B cell (primary cell): ENCODE measurements at regions of chr3 and their contacts with region 1.

Region 1: GRCh38 chr3:71006810-71007785 is 576.4 kb downstream of the FOXP1 start:
- DNase-seq: peak; percentile 69
- ATAC-seq: no peak
- H3K4me3 ChIP-seq: no peak overlapping the region
- H3K4me3 Mint-ChIP-seq: no peak overlapping the region
- H3K27ac ChIP-seq: peak overlapping the region in 1 of 2 donors; percentile 98
- H3K27ac Mint-ChIP-seq: peak overlapping the region; percentile 87
- H3K4me1 ChIP-seq: peaks cover 47 to 54% of the 10 kb centered on the region in 2 donors
- H3K4me1 Mint-ChIP-seq: peaks cover 64% of the 10 kb centered on the region
- H3K27me3 ChIP-seq: no peaks in the 10 kb centered on the region
- H3K27me3 Mint-ChIP-seq: no peaks in the 10 kb centered on the region
- CTCF ChIP-seq: peak; percentile 77

Region 2: DNA sequence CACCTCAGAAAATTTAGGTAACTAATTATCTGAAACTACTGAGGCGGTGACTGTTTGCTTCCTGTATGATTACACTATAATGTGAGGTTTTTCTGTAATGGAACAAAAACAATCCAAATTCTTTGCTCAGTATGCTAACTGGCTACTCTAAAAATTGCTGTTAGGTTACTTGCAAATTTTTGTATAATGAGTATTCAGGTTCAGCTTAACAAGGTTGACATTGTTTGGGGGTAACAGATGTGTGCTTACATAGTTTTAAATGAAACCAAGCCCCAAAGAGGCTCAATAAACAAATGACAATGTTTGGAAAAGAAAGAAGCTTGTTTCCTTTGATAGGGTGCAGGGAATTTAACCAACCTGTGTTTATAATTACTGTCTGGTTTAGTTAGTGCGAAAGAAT is 280.1 kb before region 1 on chr3:
- CTCF ChIA-PET with region 1: no interaction called
- POLR2A ChIA-PET with region 1: no interaction called
- intact Hi-C with region 1: no loop called
- DNase-seq: no peak
- ATAC-seq: no peak
- H3K4me3 ChIP-seq: no peak overlapping the region
- H3K4me3 Mint-ChIP-seq: no peak overlapping the region
- H3K27ac ChIP-seq: no peak overlapping the region
- H3K27ac Mint-ChIP-seq: no peak overlapping the region
- H3K4me1 ChIP-seq: no peaks in the 10 kb centered on the region
- H3K4me1 Mint-ChIP-seq: no peaks in the 10 kb centered on the region
- H3K27me3 ChIP-seq: no peaks in the 10 kb centered on the region
- H3K27me3 Mint-ChIP-seq: peaks cover 16% of the 10 kb centered on the region
- CTCF ChIP-seq: no peak

Region 3: GRCh38 chr3:70990723-70991122 is 16.4 kb before region 1 on chr3:
- CTCF ChIA-PET with region 1: interaction called, 4 read pairs
- POLR2A ChIA-PET with region 1: no interaction called
- intact Hi-C with region 1: loop called (anchors 2 kb)
- DNase-seq: no peak
- ATAC-seq: no peak
- H3K4me3 ChIP-seq: no peak overlapping the region
- H3K4me3 Mint-ChIP-seq: no peak overlapping the region
- H3K27ac ChIP-seq: peak overlapping the region in 1 of 2 donors; percentile 46
- H3K27ac Mint-ChIP-seq: peak overlapping the region; percentile 11
- H3K4me1 ChIP-seq: peaks cover 10 to 11% of the 10 kb centered on the region in 2 donors
- H3K4me1 Mint-ChIP-seq: peaks cover 28% of the 10 kb centered on the region
- H3K27me3 ChIP-seq: no peaks in the 10 kb centered on the region
- H3K27me3 Mint-ChIP-seq: no peaks in the 10 kb centered on the region
- CTCF ChIP-seq: no peak

Region 4: DNA sequence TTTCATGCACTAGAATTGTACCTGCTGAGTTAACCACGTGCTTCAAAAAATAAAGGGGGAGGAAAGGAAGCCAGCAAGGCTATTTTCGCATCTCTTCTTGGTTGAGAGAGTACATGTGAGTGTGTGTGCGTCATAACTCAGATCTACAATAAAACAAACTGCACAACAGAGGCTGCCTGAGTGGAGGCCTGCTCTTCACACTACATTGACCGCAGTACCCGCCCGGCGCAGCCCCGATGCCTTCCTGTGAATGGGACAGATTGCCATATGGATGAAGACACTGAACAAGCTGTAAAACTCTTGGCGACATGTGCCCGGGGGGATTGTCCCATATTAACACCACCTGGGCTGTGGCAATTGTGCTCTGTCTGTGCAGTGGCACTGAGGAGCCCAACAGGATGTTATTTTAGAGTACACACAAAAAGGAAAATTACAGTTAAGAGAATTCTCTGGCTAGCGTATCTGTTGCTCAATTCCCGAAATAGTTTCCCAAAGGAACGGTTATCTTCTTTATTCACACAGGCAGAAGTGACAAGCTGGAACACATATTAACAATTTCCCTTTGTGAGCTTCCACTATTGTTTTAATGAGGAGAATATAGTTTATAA is 24.9 kb after region 1 on chr3:
- CTCF ChIA-PET with region 1: interaction called, 10 read pairs
- POLR2A ChIA-PET with region 1: interaction called, 3 read pairs
- intact Hi-C with region 1: loop called (anchors 1 kb)
- DNase-seq: peak; percentile 92
- ATAC-seq: peak; percentile 94
- H3K4me3 ChIP-seq: peak overlapping the region in 2 of 5 experiments; percentile 10 to 31
- H3K4me3 Mint-ChIP-seq: peak overlapping the region; percentile 69
- H3K27ac ChIP-seq: peak overlapping the region; percentile 89 to 91
- H3K27ac Mint-ChIP-seq: peak overlapping the region; percentile 96
- H3K4me1 ChIP-seq: peaks cover 69 to 74% of the 10 kb centered on the region in 2 donors
- H3K4me1 Mint-ChIP-seq: peaks cover 90% of the 10 kb centered on the region
- H3K27me3 ChIP-seq: no peaks in the 10 kb centered on the region
- H3K27me3 Mint-ChIP-seq: no peaks in the 10 kb centered on the region
- CTCF ChIP-seq: no peak

Region 5: GRCh38 chr3:71069797-71070196 is 62.7 kb after region 1 on chr3:
- CTCF ChIA-PET with region 1: interaction called, 64 read pairs
- POLR2A ChIA-PET with region 1: interaction called, 6 read pairs
- intact Hi-C with region 1: loop called (anchors 1 kb)
- DNase-seq: peak; percentile 83
- ATAC-seq: peak; percentile 48
- H3K4me3 ChIP-seq: no peak overlapping the region
- H3K4me3 Mint-ChIP-seq: peak overlapping the region; percentile 69
- H3K27ac ChIP-seq: peak overlapping the region; percentile 25 to 77
- H3K27ac Mint-ChIP-seq: peak overlapping the region; percentile 84
- H3K4me1 ChIP-seq: peaks cover 55 to 67% of the 10 kb centered on the region in 2 donors
- H3K4me1 Mint-ChIP-seq: peaks cover 79% of the 10 kb centered on the region
- H3K27me3 ChIP-seq: no peaks in the 10 kb centered on the region
- H3K27me3 Mint-ChIP-seq: no peaks in the 10 kb centered on the region
- CTCF ChIP-seq: peak; percentile 78

Region 6: GRCh38 chr3:71238355-71238757 is 231.3 kb after region 1 on chr3:
- CTCF ChIA-PET with region 1: no interaction called
- POLR2A ChIA-PET with region 1: no interaction called
- intact Hi-C with region 1: loop called (anchors 5 kb)
- DNase-seq: no peak
- ATAC-seq: no peak
- H3K4me3 ChIP-seq: no peak overlapping the region
- H3K4me3 Mint-ChIP-seq: no peak overlapping the region
- H3K27ac ChIP-seq: peak overlapping the region in 1 of 2 donors; percentile 5
- H3K27ac Mint-ChIP-seq: peak overlapping the region; percentile 47
- H3K4me1 ChIP-seq: peaks cover 12 to 30% of the 10 kb centered on the region in 2 donors
- H3K4me1 Mint-ChIP-seq: peaks cover 55% of the 10 kb centered on the region
- H3K27me3 ChIP-seq: no peaks in the 10 kb centered on the region
- H3K27me3 Mint-ChIP-seq: no peaks in the 10 kb centered on the region
- CTCF ChIP-seq: no peak

Region 7: DNA sequence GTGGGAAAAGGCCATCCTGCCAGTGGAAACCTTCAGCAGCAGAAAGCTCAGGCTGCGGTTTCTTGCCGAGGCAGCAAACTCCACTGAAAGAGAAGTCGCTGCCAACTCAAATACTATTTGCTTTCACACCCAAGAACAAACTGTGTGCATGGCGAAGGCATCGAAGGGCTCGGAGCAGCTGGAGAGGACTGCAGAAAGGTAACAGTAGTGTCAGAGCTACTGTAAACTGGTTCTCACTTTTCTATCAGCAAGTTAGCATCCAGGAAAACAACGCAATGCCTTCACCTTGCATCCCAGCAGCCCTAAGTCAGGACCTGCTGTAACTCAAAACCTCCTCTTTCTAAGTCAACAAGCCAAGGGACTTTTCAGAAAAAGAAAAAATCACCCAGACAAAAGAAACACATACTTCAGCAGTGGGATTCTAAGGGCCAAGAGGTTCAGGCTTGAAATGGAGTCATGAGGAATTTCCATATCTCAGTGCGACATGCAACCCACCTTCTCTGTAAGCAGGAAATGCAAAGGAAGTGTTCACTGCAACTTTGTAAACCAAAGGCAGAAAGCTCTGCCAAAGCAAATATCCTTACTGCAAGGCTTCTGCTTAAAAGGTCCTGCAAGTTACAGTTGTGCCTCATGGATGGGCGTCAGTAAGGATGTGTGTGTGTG is 382.9 kb after region 1 on chr3:
- CTCF ChIA-PET with region 1: interaction called, 3 read pairs
- POLR2A ChIA-PET with region 1: no interaction called
- intact Hi-C with region 1: loop called (anchors 2 kb)
- DNase-seq: peak; percentile 57
- ATAC-seq: peak; percentile 11
- H3K4me3 ChIP-seq: peak overlapping the region; percentile 27 to 40 (median 33)
- H3K4me3 Mint-ChIP-seq: peak overlapping the region; percentile 84
- H3K27ac ChIP-seq: peak overlapping the region; percentile 95 to 99
- H3K27ac Mint-ChIP-seq: peak overlapping the region; percentile 98
- H3K4me1 ChIP-seq: peaks cover 84 to 90% of the 10 kb centered on the region in 2 donors
- H3K4me1 Mint-ChIP-seq: peaks cover 70% of the 10 kb centered on the region
- H3K27me3 ChIP-seq: no peaks in the 10 kb centered on the region
- H3K27me3 Mint-ChIP-seq: no peaks in the 10 kb centered on the region
- CTCF ChIP-seq: no peak